Pancreas (tissue), 10 donors: ENCODE measurements at regions of chr10 and their contacts with region 1.

Region 1: GRCh38 chr10:34815185-34816084 is at the start of gene PARD3:
- DNase-seq: peak; percentile 78 to 90 (median 83)
- ATAC-seq: peak; percentile 77 to 83 (median 80)
- H3K4me3 ChIP-seq: peak within 1 kb of the TSS; percentile 62 to 91 (median 88)
- H3K27ac ChIP-seq: peak within 1 kb of the TSS; percentile 77 to 89 (median 82)
- H3K4me1 ChIP-seq: peaks cover 1 to 22% (median 12%) of the 10 kb centered on the region in 3 donors
- H3K27me3 ChIP-seq: no peaks in the 10 kb centered on the region
- CTCF ChIP-seq: no peak
- total RNA-seq, gene PARD3: 21.8 to 32.3 (median 26.6) TPM

Region 2: DNA sequence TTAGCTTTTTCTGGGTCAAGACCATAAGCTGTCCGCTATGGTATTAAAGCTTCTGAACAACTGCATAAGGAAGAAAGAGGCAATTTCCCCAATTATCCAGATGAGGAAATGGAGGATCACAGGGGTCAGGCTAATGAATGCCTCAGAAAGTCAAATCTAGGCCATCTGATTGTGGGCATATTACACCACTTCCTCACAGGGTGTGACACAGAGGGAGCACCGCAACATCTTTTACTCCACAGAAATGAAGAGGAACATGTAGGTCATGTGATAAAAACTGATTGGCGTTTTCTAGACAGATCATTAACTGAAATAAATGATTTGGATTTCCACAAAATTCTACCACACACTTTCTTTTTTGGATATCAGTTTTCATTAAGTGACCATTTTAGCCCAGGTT is 384.8 kb before region 1 on chr10:
- intact Hi-C with region 1: no loop called
- DNase-seq: no peak
- ATAC-seq: peak in 2 of 4 donors; percentile 18 to 30
- H3K4me3 ChIP-seq: no peak overlapping the region
- H3K27ac ChIP-seq: no peak overlapping the region
- H3K4me1 ChIP-seq: no peaks in the 10 kb centered on the region
- H3K27me3 ChIP-seq: no peaks in the 10 kb centered on the region
- CTCF ChIP-seq: no peak

Region 3: DNA sequence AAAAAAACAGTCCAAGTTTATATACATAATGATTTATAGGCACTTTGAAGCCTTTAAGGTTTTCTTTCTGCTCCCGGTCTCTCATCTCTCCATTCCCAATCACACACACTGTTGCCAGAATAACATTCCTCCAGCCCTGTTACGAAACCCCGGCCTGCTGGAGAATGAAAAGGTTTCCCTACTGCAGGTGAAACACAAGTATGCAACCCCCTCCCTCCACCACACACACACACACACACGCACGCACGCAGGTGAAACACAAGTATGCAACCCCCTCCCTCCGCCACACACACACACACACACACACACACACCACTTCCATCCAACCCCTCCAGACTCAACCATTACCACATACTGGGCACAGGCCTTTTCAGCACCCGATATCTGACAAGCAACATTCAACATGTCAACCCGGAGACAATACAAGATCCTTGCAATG is 87.8 kb before region 1 on chr10:
- intact Hi-C with region 1: loop called in 1 of 3 experiments (anchors 5 kb)
- DNase-seq: peak in 3 of 6 donors; percentile 40 to 53 (median 50)
- ATAC-seq: peak in 3 of 4 donors; percentile 31 to 68 (median 52)
- H3K4me3 ChIP-seq: no peak overlapping the region
- H3K27ac ChIP-seq: no peak overlapping the region
- H3K4me1 ChIP-seq: peaks cover 15 to 27% (median 26%) of the 10 kb centered on the region in 3 donors
- H3K27me3 ChIP-seq: no peaks in the 10 kb centered on the region
- CTCF ChIP-seq: no peak

Region 4: DNA sequence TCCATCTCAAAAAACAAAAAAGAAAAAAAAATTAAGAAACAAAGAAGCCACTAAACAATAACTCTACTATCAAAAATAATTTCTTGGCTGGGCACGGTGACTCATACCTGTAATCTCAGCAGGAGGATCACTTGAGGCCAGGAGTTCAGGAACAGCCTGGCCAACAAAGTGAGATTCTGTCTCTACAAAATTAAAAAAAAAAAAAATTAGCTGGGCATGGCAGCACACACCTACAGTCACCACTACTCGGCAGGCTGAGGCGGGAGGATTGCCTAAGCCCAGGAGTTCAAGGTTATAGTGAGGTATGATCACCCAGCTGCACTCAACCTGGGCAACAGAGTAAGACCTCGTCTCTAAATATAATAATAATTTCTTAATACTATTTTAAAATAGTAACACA is 69.3 kb before region 1 on chr10:
- intact Hi-C with region 1: no loop called
- DNase-seq: no peak
- ATAC-seq: peak; percentile 54 to 75 (median 70)
- H3K4me3 ChIP-seq: no peak overlapping the region
- H3K27ac ChIP-seq: no peak overlapping the region
- H3K4me1 ChIP-seq: peaks cover 5 to 16% (median 12%) of the 10 kb centered on the region in 3 donors
- H3K27me3 ChIP-seq: no peaks in the 10 kb centered on the region
- CTCF ChIP-seq: no peak

Region 5: DNA sequence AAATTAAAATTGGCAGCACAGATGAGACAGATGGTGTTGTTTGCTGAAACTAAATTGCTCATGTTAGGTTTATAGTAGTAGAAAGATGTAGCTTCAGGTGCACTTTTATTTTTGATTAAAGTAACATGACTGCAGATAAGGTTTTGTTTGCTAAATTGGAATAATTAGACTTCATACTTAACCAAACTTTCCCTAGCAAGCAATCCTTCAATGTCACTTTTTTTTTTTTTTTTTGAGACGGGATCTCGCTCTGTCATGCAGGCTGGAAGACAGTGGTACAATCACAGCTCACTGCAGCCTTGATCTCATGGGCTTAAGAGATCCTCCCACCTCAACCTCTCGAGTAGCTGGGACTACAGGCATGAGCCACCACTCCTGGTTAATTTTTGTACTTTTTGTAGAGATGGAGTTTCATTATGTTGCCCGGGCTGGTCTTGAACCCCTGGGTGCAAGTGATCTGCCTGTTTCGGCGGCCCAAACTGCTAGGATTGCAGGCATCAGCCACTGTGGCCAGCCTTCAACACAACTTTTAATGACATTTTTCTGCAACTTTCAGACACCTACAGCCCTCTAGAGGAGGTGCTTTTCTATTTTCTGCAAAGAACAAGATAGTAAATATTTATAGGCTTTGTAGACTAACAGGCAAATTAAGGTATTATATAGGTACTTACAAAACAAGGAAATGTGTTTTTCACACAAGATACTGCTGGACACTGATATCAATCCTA is 436.1 kb after region 1 on chr10:
- intact Hi-C with region 1: no loop called
- DNase-seq: no peak
- ATAC-seq: no peak
- H3K4me3 ChIP-seq: no peak overlapping the region
- H3K27ac ChIP-seq: no peak overlapping the region
- H3K4me1 ChIP-seq: no peaks in the 10 kb centered on the region
- H3K27me3 ChIP-seq: no peaks in the 10 kb centered on the region
- CTCF ChIP-seq: no peak